ENCODE measurements at regions of chr7 and their contacts with region 1.

Region 1: DNA sequence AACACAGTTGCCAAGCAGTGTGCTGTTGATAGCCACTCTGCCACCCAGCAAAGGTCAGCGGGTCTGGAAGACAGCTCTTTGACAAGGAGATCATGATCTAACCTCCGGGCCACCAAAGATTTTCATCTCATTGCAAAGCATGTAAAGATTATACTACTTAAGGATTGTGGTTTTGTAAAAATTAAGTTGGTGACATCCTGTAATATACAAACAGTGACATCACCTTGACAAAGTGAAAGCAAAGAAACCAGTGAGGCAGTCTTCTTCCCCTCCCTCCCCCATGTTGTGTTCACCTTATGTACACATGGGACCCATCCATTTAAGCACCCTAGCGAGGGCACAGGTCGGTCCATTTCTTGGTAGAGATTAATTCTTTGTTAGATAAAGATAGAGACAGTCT is 3.9 kb downstream of the MDH2 start:
- DNase-seq: no peak
- H3K4me3 ChIP-seq: no peak overlapping the region
- H3K27ac ChIP-seq: no peak overlapping the region
- H3K27me3 ChIP-seq: no peaks in the 10 kb centered on the region
- CTCF ChIP-seq: no peak

Region 2: GRCh38 chr7:76282344-76283253 is 230.8 kb after region 1 on chr7:
- CTCF ChIA-PET with region 1: no interaction called
- POLR2A ChIA-PET with region 1: interaction called, 11 read pairs
- DNase-seq: no peak
- H3K4me3 ChIP-seq: peak overlapping the region; percentile 53
- H3K27ac ChIP-seq: no peak overlapping the region
- H3K27me3 ChIP-seq: peaks cover 29% of the 10 kb centered on the region
- CTCF ChIP-seq: no peak

Measured in AG04450 (cell line).